ENCODE measurements at regions of chr2 and their contacts with region 1.

Region 1: DNA sequence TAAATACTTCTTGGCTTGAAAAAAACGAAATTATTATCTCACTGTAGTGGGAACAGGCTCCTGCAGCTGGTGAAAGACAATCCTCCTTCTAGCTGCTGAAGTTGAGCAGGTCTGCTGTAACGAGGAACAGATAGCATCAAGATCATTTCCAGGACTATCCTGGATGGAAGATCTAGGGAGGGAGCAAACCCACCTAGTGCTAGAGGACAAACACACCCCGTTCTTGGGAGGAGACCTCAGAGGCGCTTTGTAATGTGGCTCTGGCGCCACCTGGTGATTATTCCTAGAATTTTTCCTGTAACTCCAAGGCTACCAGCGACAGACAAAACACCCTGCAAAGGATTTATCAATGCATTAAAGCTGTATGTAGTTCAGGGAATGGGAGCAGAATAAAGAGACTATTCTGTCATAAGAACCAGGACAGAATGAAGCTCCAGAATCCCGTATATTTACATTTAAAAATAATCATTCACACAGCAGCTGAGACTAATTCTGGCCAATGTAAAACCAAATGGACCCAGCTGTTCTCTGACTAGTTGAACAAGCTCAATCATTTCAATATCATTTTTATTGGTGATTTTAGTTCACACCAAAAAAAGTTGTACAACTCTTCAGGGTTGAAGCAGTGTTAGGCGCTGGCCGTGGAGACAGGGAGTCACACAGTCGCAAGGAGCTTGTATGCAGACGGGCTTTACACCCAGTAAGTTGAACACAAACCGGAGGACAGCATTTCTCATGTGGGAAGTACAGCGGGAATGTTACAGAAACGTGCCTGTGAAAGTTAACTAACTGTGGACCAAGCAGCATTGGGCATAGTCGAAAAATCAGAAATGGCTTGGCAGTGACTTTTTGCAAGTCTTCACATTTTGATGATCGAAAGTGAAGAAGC is 290.3 kb downstream of the TRIB2 start:
- DNase-seq: peak; percentile 72
- H3K4me3 Mint-ChIP-seq: no peak overlapping the region
- H3K27ac Mint-ChIP-seq: no peak overlapping the region
- H3K4me1 Mint-ChIP-seq: no peaks in the 10 kb centered on the region
- H3K27me3 Mint-ChIP-seq: peaks cover 9% of the 10 kb centered on the region

Region 2: DNA sequence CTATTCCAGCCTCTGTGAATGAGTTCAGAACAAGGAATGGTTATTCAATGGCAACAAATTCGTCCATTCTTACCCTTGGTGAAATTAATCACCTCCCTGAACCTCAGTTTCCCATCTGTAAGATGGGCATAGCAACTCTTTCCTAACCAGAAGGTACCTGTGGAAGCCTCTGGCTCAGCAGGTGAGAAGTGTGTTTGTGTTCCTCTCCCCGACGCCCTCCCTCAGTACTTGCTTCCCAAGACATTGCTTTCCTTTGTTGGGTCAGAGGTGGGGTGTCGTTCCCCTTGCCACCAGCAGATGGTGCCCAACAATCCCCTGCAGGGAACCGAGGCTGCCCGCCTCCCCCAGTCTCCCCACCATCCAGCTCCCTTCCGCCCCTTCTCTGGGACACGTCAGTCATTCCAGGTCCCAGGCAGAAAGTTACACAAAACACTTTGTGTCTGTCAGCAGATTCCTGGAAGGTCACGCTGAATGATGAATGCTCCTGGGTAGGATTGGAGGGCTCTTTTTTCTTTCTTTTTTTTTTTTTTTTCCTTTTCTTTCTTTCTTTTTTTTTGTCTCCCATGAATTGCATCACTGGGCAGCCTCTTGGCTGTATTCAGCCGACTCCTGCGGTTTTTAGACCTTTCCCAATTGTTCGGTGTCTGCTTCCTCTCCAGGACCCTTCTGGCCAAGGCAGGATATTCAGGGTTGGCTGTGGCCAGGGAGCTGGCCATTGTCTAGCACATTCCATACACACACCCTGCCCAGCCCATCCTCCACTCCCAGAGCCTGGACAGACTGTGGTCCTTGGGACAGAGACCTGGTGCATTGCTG is 1143.4 kb before region 1 on chr2:
- CTCF ChIA-PET with region 1: interaction called, 4 read pairs
- intact Hi-C with region 1: loop called (anchors 10 kb)
- DNase-seq: peak; percentile 74
- H3K4me3 Mint-ChIP-seq: no peak overlapping the region
- H3K27ac Mint-ChIP-seq: no peak overlapping the region
- H3K4me1 Mint-ChIP-seq: peaks cover 22% of the 10 kb centered on the region
- H3K27me3 Mint-ChIP-seq: peaks cover 2% of the 10 kb centered on the region

Region 3: GRCh38 chr2:12163866-12164265 is 843.2 kb before region 1 on chr2:
- CTCF ChIA-PET with region 1: no interaction called
- intact Hi-C with region 1: loop called (anchors 2 kb)
- DNase-seq: no peak
- H3K4me3 Mint-ChIP-seq: no peak overlapping the region
- H3K27ac Mint-ChIP-seq: no peak overlapping the region
- H3K4me1 Mint-ChIP-seq: peaks cover 28% of the 10 kb centered on the region
- H3K27me3 Mint-ChIP-seq: peaks cover 3% of the 10 kb centered on the region

Region 4: GRCh38 chr2:12430407-12431133 is 576.5 kb before region 1 on chr2:
- CTCF ChIA-PET with region 1: interaction called, 4 read pairs
- intact Hi-C with region 1: loop called (anchors 5 kb)
- DNase-seq: peak; percentile 36
- H3K4me3 Mint-ChIP-seq: no peak overlapping the region
- H3K27ac Mint-ChIP-seq: no peak overlapping the region
- H3K4me1 Mint-ChIP-seq: peaks cover 30% of the 10 kb centered on the region
- H3K27me3 Mint-ChIP-seq: no peaks in the 10 kb centered on the region

Region 5: GRCh38 chr2:12931186-12931844 is 75.8 kb before region 1 on chr2:
- CTCF ChIA-PET with region 1: interaction called, 5 read pairs
- intact Hi-C with region 1: loop called (anchors 5 kb)
- DNase-seq: no peak
- H3K4me3 Mint-ChIP-seq: no peak overlapping the region
- H3K27ac Mint-ChIP-seq: no peak overlapping the region
- H3K4me1 Mint-ChIP-seq: peaks cover 8% of the 10 kb centered on the region
- H3K27me3 Mint-ChIP-seq: peaks cover 2% of the 10 kb centered on the region

Region 6: GRCh38 chr2:12965540-12966269 is 41.4 kb before region 1 on chr2:
- CTCF ChIA-PET with region 1: interaction called, 10 read pairs
- intact Hi-C with region 1: loop called (anchors 5 kb)
- DNase-seq: no peak
- H3K4me3 Mint-ChIP-seq: no peak overlapping the region
- H3K27ac Mint-ChIP-seq: no peak overlapping the region
- H3K4me1 Mint-ChIP-seq: peaks cover 14% of the 10 kb centered on the region
- H3K27me3 Mint-ChIP-seq: peaks cover 2% of the 10 kb centered on the region

Region 7: DNA sequence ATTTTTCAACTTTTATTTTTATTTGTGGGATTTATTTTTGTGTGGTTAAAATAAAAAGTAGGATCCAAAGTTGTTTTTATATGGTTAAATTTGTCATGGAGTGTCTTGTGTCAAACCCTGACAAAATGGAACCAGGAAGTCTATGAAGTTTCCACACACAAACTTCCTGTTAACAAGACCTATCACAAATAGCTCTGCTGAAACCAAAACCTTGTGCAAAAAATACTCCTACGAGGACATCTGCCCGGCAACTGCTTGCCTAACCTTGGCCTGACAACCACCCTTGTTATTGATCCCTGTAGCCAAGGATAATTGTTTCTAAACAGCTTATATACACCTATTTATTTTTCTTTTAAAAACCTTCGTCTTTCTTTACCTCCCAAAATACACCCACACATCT is 99.2 kb after region 1 on chr2:
- CTCF ChIA-PET with region 1: no interaction called
- intact Hi-C with region 1: no loop called
- DNase-seq: no peak
- H3K4me3 Mint-ChIP-seq: no peak overlapping the region
- H3K27ac Mint-ChIP-seq: no peak overlapping the region
- H3K4me1 Mint-ChIP-seq: no peaks in the 10 kb centered on the region
- H3K27me3 Mint-ChIP-seq: peaks cover 16% of the 10 kb centered on the region

Measured in activated naive CD4-positive, alpha-beta T cell treated with anti-CD3 and anti-CD28 coated beads for 36 hours (primary cell).